Astrocyte of the cerebellum (primary cell): ENCODE measurements at regions of chr6 and their contacts with region 1.

Region 1: GRCh38 chr6:28863604-28864320 is 60.0 kb downstream of the TRIM27 start:
- DNase-seq: peak; percentile 70
- H3K4me3 ChIP-seq: peak overlapping the region; percentile 94
- CTCF ChIP-seq: no peak

Region 2: GRCh38 chr6:28907394-28907793 is 43.6 kb after region 1 on chr6:
- in situ Hi-C with region 1: loop called (anchors 5 kb)
- DNase-seq: no peak
- H3K4me3 ChIP-seq: no peak overlapping the region
- CTCF ChIP-seq: no peak